ENCODE measurements at regions of chr22 and their contacts with region 1.

Region 1: GRCh38 chr22:25777870-25778269 is 35.9 kb downstream of the MYO18B start:
- DNase-seq: peak in 1 of 2 experiments; percentile 51
- H3K4me3 ChIP-seq: no peak overlapping the region
- H3K4me1 ChIP-seq: peaks cover 5% of the 10 kb centered on the region
- H3K27me3 ChIP-seq: no peaks in the 10 kb centered on the region

Region 2: GRCh38 chr22:25235547-25236290 is 542.2 kb before region 1 on chr22:
- in situ Hi-C with region 1: loop called (anchors 25 kb)
- DNase-seq: peak; percentile 63 to 94
- H3K4me3 ChIP-seq: 0 out of 2 replicates have a peak overlapping the region, but pooled peaks have one; percentile 4
- H3K4me1 ChIP-seq: no peaks in the 10 kb centered on the region
- H3K27me3 ChIP-seq: no peaks in the 10 kb centered on the region

Region 3: GRCh38 chr22:25465949-25466348 is 311.9 kb before region 1 on chr22:
- in situ Hi-C with region 1: loop called (anchors 5 kb)
- DNase-seq: no peak
- H3K4me3 ChIP-seq: no peak overlapping the region
- H3K4me1 ChIP-seq: no peaks in the 10 kb centered on the region
- H3K27me3 ChIP-seq: no peaks in the 10 kb centered on the region

Region 4: GRCh38 chr22:26330966-26331625 is 553.2 kb after region 1 on chr22:
- in situ Hi-C with region 1: loop called (anchors 25 kb)
- DNase-seq: peak; percentile 28 to 72
- H3K4me3 ChIP-seq: no peak overlapping the region
- H3K4me1 ChIP-seq: no peaks in the 10 kb centered on the region
- H3K27me3 ChIP-seq: peaks cover 14% of the 10 kb centered on the region

Measured in HAP-1 (cell line).